ENCODE measurements at regions of chr1 and their contacts with region 1.

Region 1: DNA sequence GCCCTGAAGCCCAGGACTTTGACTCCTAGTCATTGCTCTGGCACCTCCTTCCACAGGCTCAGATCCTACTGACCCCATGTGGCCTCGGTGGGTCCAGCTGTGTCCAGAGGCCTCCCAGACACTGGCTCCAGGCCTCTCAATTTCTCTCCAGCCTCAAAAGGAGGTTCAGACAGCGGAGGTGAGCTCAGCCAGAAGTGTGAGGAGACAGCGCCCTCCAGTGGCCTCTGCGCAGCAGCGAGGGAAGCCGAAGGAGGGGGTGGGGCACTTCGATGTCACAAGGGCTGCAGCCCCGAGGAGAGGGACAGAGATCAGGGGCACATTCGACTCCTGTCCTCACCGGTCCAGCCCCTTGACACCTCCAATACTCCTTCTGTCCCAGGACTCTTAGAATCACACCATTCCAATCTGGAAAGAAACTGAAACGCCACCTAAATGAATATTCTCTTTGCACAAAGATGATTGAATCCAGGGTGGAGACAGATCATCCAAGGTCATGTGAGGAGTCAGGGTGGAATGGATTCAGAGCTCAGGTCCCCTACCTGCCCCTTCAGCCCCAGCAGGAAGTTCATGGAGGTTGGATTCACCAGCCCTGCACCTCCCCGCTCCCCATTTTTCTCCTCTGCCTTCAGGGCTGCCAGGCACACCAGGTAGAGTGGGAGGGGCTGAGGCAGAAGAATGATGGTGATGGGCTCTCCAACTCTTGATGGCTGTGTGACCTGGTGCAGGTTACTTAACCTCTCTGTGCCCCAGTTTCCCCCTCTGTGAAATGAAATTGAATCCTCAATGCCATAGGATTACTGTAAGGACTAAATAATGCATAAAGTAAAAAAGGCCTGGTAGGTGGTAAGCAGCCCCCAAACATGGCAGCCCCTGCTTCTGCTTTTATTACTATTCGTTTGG is 34.8 kb upstream of the ZBTB40 start:
- DNase-seq: peak; percentile 86
- H3K4me3 Mint-ChIP-seq: no peak overlapping the region
- H3K27ac Mint-ChIP-seq: no peak overlapping the region
- H3K4me1 Mint-ChIP-seq: no peaks in the 10 kb centered on the region
- H3K27me3 Mint-ChIP-seq: peaks cover 37% of the 10 kb centered on the region

Region 2: GRCh38 chr1:22105611-22106207 is 311.1 kb before region 1 on chr1:
- CTCF ChIA-PET with region 1: interaction called, 12 read pairs
- POLR2A ChIA-PET with region 1: no interaction called
- intact Hi-C with region 1: no loop called
- DNase-seq: peak; percentile 29
- H3K4me3 Mint-ChIP-seq: no peak overlapping the region
- H3K27ac Mint-ChIP-seq: peak overlapping the region; percentile 72
- H3K4me1 Mint-ChIP-seq: peaks cover 50% of the 10 kb centered on the region
- H3K27me3 Mint-ChIP-seq: no peaks in the 10 kb centered on the region

Region 3: GRCh38 chr1:22131875-22132486 is 284.8 kb before region 1 on chr1:
- CTCF ChIA-PET with region 1: interaction called, 30 read pairs
- POLR2A ChIA-PET with region 1: no interaction called
- intact Hi-C with region 1: loop called (anchors 2 kb)
- DNase-seq: peak; percentile 67
- H3K4me3 Mint-ChIP-seq: no peak overlapping the region
- H3K27ac Mint-ChIP-seq: no peak overlapping the region
- H3K4me1 Mint-ChIP-seq: no peaks in the 10 kb centered on the region
- H3K27me3 Mint-ChIP-seq: no peaks in the 10 kb centered on the region

Region 4: DNA sequence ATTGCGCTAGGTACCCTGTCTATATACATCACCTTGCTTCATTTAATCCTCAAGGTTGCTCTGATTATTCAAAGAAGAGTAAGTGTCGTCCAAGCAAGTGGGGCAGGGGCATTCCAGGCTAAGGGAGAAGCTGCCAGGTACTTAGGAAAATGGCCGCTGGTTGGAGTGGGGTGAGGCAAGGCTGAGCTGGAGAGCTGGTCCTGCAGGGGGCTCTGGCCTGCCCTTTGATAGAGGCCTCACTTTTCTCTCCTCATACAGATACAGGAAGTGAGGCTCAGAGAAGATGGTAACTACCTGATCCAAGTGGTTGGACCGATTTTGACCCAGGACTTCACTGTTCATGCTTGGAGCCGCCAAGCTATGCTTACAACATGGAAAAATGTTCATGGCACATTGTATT is 52.0 kb before region 1 on chr1:
- CTCF ChIA-PET with region 1: no interaction called
- POLR2A ChIA-PET with region 1: no interaction called
- intact Hi-C with region 1: no loop called
- DNase-seq: no peak
- H3K4me3 Mint-ChIP-seq: no peak overlapping the region
- H3K27ac Mint-ChIP-seq: no peak overlapping the region
- H3K4me1 Mint-ChIP-seq: no peaks in the 10 kb centered on the region
- H3K27me3 Mint-ChIP-seq: peaks cover 28% of the 10 kb centered on the region

Region 5: GRCh38 chr1:22471078-22471477 is 54.3 kb after region 1 on chr1:
- CTCF ChIA-PET with region 1: no interaction called
- POLR2A ChIA-PET with region 1: no interaction called
- intact Hi-C with region 1: no loop called
- DNase-seq: no peak
- H3K4me3 Mint-ChIP-seq: no peak overlapping the region
- H3K27ac Mint-ChIP-seq: no peak overlapping the region
- H3K4me1 Mint-ChIP-seq: peaks cover 12% of the 10 kb centered on the region
- H3K27me3 Mint-ChIP-seq: no peaks in the 10 kb centered on the region

Region 6: DNA sequence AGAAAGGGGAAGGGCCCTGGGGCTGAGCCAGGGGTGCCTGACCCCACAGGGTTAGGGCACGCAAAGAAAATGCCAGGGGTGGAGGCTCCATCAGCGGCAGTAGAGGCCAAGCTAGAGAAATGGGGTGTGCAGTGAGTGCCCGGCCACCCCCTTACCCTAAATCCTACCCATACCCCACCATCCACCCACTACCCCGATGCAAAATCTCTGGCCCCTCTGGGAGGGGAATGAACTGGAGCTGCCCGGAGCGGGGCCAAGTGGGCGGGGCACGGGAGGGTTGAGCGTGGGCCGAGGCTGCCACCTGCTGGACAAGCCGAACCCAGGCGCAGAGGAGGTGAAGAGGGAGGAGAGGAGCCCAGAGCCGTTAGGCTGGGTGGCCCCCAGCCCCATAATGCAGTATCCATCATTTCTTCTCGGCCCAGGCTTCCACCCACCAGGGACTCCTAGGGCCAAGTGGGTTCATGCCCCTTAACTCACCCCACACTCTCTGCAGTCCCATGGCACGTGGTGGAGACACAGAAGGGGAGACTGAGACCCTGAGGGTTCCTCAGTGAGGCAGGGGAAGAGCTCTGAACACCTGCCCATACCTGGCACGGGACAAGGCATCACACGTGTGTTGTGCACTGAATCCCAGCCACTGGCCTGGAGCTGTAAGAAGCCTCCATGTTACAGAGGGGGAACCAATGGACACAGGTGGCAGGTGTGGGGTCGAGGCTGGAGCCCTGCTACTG is 225.3 kb after region 1 on chr1:
- CTCF ChIA-PET with region 1: interaction called, 26 read pairs
- POLR2A ChIA-PET with region 1: interaction called, 3 read pairs
- intact Hi-C with region 1: loop called (anchors 1 kb)
- DNase-seq: peak; percentile 77
- H3K4me3 Mint-ChIP-seq: no peak overlapping the region
- H3K27ac Mint-ChIP-seq: no peak overlapping the region
- H3K4me1 Mint-ChIP-seq: no peaks in the 10 kb centered on the region
- H3K27me3 Mint-ChIP-seq: peaks cover 22% of the 10 kb centered on the region

Region 7: DNA sequence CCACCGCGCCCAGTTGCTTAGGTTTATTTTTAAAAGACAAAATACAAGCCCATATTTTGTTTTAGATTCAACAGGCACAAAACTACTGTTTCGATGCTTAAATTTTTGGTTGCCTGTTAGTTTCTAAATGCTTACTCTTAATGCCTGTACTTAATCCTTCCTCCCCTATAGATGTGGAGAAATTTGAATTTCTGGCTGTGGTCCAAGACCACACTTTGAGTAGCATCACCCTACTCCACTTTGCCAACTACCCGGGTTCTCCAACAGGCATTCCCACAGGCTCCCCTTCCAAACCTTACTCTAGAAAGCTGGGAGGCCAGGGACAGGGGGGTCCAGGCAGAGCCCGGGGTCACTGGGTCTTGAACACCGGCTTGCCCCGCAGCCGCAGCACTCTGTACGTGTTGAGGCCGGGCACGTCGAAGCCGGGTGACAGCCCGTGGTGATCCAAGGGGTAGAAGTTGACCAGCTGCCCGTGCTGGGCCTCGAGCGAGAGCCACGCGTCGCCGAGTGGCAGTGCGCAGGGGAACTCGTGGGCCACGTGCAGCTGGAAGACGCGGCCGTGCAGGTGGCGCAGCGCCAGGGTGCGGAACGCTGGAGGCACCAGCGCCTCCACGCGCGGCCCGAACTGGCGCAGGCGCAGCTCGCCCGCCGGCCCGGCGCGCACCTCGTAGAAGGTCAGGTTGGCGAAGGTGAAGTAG is 536.0 kb after region 1 on chr1:
- CTCF ChIA-PET with region 1: no interaction called
- POLR2A ChIA-PET with region 1: no interaction called
- intact Hi-C with region 1: no loop called
- DNase-seq: no peak
- H3K4me3 Mint-ChIP-seq: no peak overlapping the region
- H3K27ac Mint-ChIP-seq: no peak overlapping the region
- H3K4me1 Mint-ChIP-seq: no peaks in the 10 kb centered on the region
- H3K27me3 Mint-ChIP-seq: peaks cover 25% of the 10 kb centered on the region